Posterior cingulate gyrus (tissue), 11 donors: ENCODE measurements at regions of chr5 and their contacts with region 1.

Region 1: GRCh38 chr5:123807177-123807945 is 295.4 kb downstream of the CSNK1G3 start:
- DNase-seq: no peak

Region 2: GRCh38 chr5:123371575-123372179 is 435.7 kb before region 1 on chr5:
- intact Hi-C with region 1: no loop called
- DNase-seq: peak in 7 of 10 donors; percentile 13 to 88 (median 52)

Region 3: DNA sequence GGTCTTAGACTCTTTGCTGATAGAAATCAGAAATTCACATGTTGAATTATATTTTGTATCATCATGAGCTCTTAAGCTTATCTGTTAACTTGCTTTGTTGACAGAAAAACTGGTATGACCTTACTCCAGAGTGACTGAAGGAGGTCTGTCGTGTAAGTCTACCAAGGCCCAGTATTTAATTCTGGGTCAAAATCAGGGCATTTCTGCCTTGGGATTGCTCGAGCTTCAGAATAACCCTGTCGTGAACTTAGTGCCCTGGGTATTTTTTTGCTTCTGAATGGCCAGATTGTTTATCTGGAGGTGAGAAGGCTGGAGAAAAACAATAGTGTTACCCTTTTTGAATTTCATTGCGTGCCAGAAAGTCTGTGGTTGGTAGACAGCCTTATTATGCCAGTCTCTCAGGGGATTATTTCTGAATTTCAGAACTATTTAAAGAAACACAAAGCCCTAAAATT is 28.0 kb after region 1 on chr5:
- intact Hi-C with region 1: no loop called
- DNase-seq: no peak

Region 4: GRCh38 chr5:124162779-124163532 is 355.6 kb after region 1 on chr5:
- intact Hi-C with region 1: loop called (anchors 5 kb)
- DNase-seq: peak; percentile 66 to 97 (median 79)